ENCODE measurements at regions of chr6 and their contacts with region 1.

Region 1: GRCh38 chr6:36027501-36028087 is at the start of gene MAPK14:
- DNase-seq: peak; percentile 98 to 99
- H3K4me3 ChIP-seq: peak within 1 kb of the TSS; percentile 92 to 100 (median 99)
- H3K27ac ChIP-seq: peak within 1 kb of the TSS; percentile 83 to 85
- H3K4me1 ChIP-seq: no peaks in the 10 kb centered on the region
- H3K27me3 ChIP-seq: no peaks in the 10 kb centered on the region
- CTCF ChIP-seq: peak; percentile 90 to 95 (median 94)
- POLR2A ChIP-seq: peak; percentile 83
- total RNA-seq, gene MAPK14: 72.8 to 85.6 (median 81.3) TPM

Region 2: GRCh38 chr6:35161776-35162607 is 865.6 kb before region 1 on chr6:
- intact Hi-C with region 1: loop called (anchors 5 kb)
- DNase-seq: no peak
- H3K4me3 ChIP-seq: no peak overlapping the region
- H3K27ac ChIP-seq: no peak overlapping the region
- H3K4me1 ChIP-seq: no peaks in the 10 kb centered on the region
- H3K27me3 ChIP-seq: no peaks in the 10 kb centered on the region
- CTCF ChIP-seq: no peak
- POLR2A ChIP-seq: no peak

Region 3: GRCh38 chr6:36094753-36095496 is 67.3 kb after region 1 on chr6:
- intact Hi-C with region 1: loop called (anchors 5 kb)
- DNase-seq: peak; percentile 70 to 83
- H3K4me3 ChIP-seq: no peak overlapping the region
- H3K27ac ChIP-seq: peak overlapping the region in 1 of 2 donors; percentile 6
- H3K4me1 ChIP-seq: no peaks in the 10 kb centered on the region
- H3K27me3 ChIP-seq: no peaks in the 10 kb centered on the region
- CTCF ChIP-seq: peak; percentile 88 to 94 (median 93)
- POLR2A ChIP-seq: no peak

Measured in breast epithelium (tissue), 4 donors.